ENCODE measurements at regions of chr2 and their contacts with region 1.

Region 1: DNA sequence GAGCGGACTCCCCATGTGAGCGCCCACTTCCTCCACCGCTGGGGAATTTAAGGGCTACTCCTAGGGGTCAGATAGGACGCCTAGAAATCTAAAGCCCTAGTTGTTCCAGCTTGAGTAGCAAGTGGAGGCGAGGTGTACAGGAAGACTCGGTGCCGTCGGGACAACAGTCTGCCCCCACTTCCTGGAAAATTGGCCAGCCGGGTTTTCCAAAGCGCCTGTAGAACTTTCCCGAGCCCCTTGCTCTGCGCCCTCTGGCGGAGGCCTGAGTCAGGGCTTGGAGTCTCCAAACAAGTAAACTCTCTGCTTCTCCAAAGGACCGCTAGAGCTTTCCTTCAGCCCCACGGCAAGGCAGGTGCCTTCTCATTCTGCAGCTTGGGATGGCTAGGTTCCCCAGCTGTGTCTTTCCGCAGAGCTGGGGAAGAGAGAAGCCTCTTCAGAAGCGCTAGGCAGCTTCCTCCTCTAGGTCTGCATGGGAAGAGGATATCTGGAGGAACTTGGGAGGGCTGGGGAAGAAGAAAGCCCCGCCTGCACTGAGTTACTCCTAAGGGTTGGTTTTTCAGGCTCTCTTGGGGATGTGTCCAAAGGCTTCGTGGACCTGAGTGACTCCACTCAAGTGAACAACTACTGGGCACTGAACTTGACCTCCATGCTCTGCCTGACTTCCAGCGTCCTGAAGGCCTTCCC is 688 bp downstream of the SPR start:
- DNase-seq: no peak
- H3K4me3 ChIP-seq: peak overlapping the region; percentile 60
- H3K27me3 ChIP-seq: peaks cover 2% of the 10 kb centered on the region
- CTCF ChIP-seq: peak; percentile 99

Region 2: GRCh38 chr2:71545572-71546274 is 1342.2 kb before region 1 on chr2:
- CTCF ChIA-PET with region 1: interaction called, 10 read pairs
- POLR2A ChIA-PET with region 1: no interaction called
- DNase-seq: no peak
- H3K4me3 ChIP-seq: no peak overlapping the region
- H3K27me3 ChIP-seq: peaks cover 10% of the 10 kb centered on the region
- CTCF ChIP-seq: peak; percentile 79

Region 3: DNA sequence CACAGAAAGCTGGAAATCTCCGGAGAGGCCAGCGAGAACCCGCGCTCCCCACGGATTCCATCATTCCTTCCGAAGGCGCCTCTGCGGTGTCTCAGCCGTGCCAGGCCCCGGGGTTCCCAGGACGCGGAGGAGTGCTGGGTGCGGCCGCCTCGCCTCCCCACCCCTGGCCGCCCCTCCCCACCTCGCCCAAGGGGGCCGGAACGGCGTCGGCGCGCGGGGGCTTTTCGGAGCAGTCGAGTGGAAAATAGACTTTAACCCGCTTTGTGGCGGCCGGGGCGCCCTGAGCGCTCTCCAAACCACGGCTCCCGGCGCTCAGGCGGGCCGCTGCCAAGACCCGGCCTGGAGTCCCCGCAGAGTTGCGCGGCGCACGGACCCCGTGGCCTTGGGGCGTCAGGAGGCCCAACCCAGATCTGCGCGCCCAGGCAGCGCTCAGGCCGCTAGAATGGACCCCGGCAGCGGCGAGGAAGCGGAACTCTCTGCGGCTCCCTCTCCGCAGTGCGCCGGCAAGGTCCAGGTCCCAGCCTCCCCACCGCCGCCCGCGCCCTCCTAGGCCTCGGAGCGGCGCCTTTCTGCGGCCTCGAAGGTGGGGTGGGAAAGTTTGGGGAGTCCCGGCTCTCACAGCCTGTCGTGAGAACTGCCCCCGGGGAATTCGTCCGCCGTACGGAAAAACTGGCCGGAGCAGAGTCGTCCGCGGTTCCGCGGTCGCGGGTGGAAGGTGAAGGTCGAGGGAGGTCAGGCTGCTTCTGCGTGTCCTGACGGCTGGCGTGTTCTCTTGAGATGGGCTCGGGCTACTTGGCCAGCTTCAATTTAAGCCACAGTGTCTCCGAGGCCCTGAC is 28.2 kb after region 1 on chr2:
- CTCF ChIA-PET with region 1: interaction called, 13 read pairs
- POLR2A ChIA-PET with region 1: no interaction called
- DNase-seq: no peak
- H3K4me3 ChIP-seq: no peak overlapping the region
- H3K27me3 ChIP-seq: peaks cover 68% of the 10 kb centered on the region
- CTCF ChIP-seq: no peak

Region 4: DNA sequence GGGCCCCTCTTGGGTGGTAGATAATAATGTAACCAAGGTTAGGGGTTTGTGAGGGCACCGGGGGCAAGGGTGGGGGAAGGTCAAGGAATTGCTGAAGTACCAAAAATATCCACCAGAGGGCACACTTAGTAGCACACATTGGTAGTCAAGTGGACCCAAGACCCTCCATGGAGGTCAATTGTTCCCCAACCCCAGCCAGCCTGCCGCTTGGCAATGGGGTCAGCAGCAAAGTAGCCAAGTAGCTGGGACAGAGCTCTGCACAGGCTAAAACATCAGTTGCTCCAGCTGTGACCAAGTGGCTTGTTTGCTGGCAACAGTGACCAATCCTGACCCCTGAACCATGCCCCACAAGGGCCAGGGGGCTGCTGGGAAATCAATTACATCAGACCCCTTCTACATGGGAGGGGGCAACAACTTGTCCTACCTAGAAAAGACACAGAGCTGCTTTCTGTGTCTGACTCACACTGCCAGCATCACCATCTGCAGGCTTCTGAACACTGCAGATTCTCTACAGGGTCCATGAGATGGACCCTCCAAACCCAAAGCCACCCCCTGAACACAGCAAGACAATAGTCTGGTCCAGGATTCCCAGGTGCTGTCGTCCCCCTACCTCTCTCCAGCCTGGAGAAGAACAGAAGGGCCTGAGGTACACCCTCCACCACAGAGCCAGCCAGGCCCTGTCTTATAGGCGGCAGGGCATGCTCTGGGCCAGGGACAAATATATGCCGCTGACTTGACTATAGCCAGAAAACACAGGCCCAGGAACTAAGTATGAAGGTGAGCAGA is 105.4 kb after region 1 on chr2:
- CTCF ChIA-PET with region 1: interaction called, 10 read pairs
- POLR2A ChIA-PET with region 1: no interaction called
- DNase-seq: no peak
- H3K4me3 ChIP-seq: no peak overlapping the region
- H3K27me3 ChIP-seq: no peaks in the 10 kb centered on the region
- CTCF ChIP-seq: peak; percentile 71

Region 5: GRCh38 chr2:73156539-73157124 is 268.7 kb after region 1 on chr2:
- CTCF ChIA-PET with region 1: interaction called, 98 read pairs
- POLR2A ChIA-PET with region 1: no interaction called
- DNase-seq: no peak
- H3K4me3 ChIP-seq: no peak overlapping the region
- H3K27me3 ChIP-seq: peaks cover 6% of the 10 kb centered on the region
- CTCF ChIP-seq: peak; percentile 94

Region 6: DNA sequence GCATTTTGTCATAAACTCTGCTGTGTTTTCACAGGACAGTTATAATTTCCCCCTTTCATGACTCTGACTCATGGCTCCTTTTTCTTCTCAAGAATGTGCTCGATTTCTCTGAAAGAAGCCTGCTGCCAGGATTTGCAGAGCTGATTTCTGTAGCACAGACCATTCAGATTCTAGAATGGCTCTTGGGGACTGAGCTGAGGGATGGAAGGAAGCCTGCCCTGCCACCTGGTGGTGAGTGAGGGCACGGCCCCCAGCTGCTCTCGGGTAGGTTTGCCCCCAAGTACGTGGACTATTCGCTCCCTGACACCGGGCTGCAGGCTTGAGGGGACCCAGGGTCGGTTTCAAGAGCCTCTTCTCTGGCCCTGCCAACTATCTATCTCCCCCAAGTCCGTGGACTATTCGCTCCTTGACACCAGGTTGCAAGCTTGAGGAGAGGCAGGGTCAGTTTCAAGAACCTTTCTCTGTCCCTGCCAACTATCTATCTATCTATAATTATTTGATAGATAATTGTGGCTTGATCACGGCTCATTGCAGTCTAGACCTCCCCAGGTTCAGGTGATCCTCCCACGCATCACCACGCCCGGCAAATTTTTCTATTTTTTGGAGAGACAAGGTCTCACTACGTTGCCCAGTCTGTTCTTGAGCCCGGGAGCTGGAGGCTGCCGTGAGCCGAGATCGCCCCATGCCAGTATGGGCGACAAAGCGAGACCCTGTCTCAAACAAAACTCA is 324.7 kb after region 1 on chr2:
- CTCF ChIA-PET with region 1: interaction called, 37 read pairs
- POLR2A ChIA-PET with region 1: no interaction called
- DNase-seq: peak; percentile 35
- H3K4me3 ChIP-seq: no peak overlapping the region
- H3K27me3 ChIP-seq: peaks cover 5% of the 10 kb centered on the region; the same call in 1 of the 2 replicates
- CTCF ChIP-seq: peak; percentile 98

Measured in BJ (cell line).